ENCODE measurements at regions of chr16 and their contacts with region 1.

Region 1: DNA sequence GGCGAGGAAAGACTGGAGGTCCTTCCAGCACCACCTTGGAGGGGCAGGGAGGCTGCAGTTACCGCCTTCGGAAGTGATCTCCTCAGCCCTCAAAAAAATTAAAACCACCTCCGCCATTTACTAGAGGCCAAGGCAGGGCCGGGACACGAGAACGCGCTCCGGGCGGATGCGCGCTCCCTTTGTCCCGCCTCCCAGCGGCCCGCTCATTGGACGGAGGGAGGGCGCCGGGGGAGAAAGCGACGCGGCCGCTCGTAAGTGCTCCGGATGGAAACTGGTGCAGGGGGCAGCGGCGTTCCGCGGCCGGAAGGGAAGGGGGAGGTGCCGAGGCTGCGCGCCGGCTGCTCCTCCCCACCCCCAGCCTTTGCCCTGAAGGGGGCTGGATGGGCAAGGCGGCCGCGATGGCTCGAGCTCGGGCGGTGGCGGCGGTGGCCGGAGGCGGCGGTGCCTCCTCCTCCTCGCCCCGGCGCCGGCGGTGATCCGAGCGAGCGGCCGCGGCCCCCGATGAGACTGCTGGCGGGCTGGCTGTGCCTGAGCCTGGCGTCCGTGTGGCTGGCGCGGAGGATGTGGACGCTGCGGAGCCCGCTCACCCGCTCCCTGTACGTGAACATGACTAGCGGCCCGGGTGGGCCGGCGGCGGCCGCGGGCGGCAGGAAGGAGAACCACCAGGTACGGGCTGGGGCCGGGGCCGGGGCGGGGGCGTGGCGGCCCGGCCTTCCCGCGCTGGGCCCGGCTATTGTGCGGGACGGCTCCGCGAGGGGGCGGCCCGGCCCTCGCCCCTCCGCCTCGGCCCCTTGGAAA is at the start of gene METTL9:
- DNase-seq: peak; percentile 96
- H3K4me3 Mint-ChIP-seq: peak within 1 kb of the TSS; percentile 93
- H3K27ac Mint-ChIP-seq: peak within 1 kb of the TSS; percentile 92
- H3K4me1 Mint-ChIP-seq: peaks cover 57% of the 10 kb centered on the region
- H3K27me3 Mint-ChIP-seq: no peaks in the 10 kb centered on the region
- total RNA-seq, gene METTL9: 100 to 104 TPM

Region 2: GRCh38 chr16:21167360-21167759 is 432.1 kb before region 1 on chr16:
- CTCF ChIA-PET with region 1: no interaction called
- POLR2A ChIA-PET with region 1: no interaction called
- intact Hi-C with region 1: no loop called
- DNase-seq: no peak
- H3K4me3 Mint-ChIP-seq: no peak overlapping the region
- H3K27ac Mint-ChIP-seq: no peak overlapping the region
- H3K4me1 Mint-ChIP-seq: peaks cover 3% of the 10 kb centered on the region
- H3K27me3 Mint-ChIP-seq: no peaks in the 10 kb centered on the region

Region 3: GRCh38 chr16:21626659-21627277 is 27.3 kb after region 1 on chr16:
- CTCF ChIA-PET with region 1: no interaction called
- POLR2A ChIA-PET with region 1: no interaction called
- intact Hi-C with region 1: loop called (anchors 1 kb)
- DNase-seq: peak; percentile 43
- H3K4me3 Mint-ChIP-seq: no peak overlapping the region
- H3K27ac Mint-ChIP-seq: peak overlapping the region; percentile 59
- H3K4me1 Mint-ChIP-seq: peaks cover 47% of the 10 kb centered on the region
- H3K27me3 Mint-ChIP-seq: no peaks in the 10 kb centered on the region

Measured in activated CD4-positive, alpha-beta memory T cell treated with anti-CD3 and anti-CD28 coated beads for 36 hours (primary cell).